ENCODE measurements at regions of chr15 and their contacts with region 1.

Region 1: DNA sequence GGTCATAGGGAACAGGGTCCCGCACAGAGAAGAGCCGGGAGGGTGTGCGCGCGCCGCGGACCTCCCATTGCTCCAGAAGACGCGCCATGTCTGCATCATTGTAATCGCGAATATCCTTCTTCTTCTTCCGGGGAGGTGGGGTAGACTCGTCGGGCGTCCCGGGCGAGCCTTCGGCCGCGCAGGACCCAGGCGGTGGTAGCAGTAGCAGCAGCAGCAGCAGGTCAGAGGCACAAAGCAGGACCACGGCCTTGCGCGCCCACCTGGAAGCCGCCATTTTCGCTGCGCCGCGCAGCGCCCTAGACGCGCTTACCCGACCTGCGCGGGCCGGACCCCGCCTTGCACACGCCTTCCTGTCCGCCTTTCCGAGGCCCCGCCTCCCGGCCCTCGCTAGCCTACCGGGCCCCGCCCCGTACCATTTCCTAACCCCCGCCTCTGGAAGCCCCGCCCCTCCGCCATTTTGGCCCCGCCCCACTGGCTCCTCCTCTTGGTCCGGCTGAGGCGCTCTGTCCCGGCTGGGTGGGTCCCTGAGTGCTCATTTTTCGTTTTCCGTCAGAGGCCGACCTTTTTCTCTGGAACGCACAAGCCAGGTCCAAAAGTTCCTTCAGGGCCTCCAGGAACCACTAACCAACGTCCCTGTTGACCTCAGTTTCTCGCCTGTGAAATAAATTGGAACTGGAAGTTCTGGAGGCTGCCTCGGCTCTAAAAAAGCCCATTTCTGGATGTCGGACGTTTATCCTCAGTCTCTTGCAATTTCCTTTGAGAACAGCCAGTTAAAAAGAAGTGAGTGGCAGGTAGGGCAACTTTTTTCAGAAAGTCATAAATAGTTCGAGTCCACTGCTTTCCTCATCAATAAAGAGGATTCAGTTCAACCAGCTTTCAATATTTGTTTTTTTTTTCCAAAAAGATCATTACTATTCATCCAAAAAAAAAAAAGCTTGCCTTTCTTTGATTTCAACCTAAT is at the start of gene MESD:
- ATAC-seq: peak; percentile 65 to 99 (median 98)
- H3K4me3 ChIP-seq: peak within 1 kb of the TSS; percentile 81 to 99 (median 85)
- H3K27ac ChIP-seq: peak within 1 kb of the TSS; percentile 81 to 90
- H3K4me1 ChIP-seq: peaks cover 10 to 18% of the 10 kb centered on the region in 2 donors
- total RNA-seq, gene MESD: 9.7 to 83.2 (median 23.1) TPM

Region 2: DNA sequence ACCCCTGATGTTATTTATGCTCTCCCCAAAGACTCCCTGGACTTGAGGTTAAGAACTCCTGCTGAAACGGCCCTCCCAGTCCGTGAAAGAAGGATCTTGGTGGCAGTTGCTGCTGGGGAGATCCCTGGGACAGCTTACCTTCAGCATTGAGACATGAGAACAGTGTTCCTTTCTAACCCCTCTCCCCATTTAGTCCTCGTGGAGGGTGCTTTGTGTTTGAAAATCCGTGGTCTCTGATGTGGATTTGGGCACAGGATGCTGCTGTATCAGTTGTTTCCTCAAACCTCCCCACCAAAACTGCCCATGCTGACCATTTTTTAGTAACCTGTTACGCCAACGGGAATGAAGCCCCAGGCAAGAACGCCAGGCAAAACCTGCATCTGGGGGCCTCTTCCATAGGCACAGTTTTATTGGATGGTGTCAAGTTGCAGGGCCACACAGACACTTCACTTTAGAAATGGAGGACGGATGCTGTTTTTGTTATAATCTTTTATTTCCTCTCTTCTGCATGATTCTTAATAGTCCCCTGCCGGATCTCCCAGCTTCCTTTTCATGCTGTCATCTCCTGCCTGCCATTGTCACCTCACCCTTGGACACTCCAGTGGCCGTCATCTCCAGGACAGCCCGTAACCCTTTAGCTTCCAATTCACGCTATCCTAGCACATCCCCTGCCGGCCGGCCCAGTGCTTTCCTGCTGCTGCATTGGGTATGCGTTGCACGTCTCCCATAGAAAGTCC is 242.3 kb before region 1 on chr15:
- in situ Hi-C with region 1: no loop called
- ATAC-seq: peak in 4 of 8 experiments; percentile 35 to 64 (median 47)
- H3K4me3 ChIP-seq: no peak overlapping the region
- H3K27ac ChIP-seq: no peak overlapping the region
- H3K4me1 ChIP-seq: peaks cover 15 to 37% of the 10 kb centered on the region in 2 donors

Region 3: GRCh38 chr15:81106560-81106959 is 116.8 kb after region 1 on chr15:
- in situ Hi-C with region 1: loop called in 1 of 9 experiments (anchors 25 kb)
- ATAC-seq: peak; percentile 12 to 78 (median 36)
- H3K4me3 ChIP-seq: no peak overlapping the region
- H3K27ac ChIP-seq: no peak overlapping the region
- H3K4me1 ChIP-seq: no peaks in the 10 kb centered on the region

Region 4: DNA sequence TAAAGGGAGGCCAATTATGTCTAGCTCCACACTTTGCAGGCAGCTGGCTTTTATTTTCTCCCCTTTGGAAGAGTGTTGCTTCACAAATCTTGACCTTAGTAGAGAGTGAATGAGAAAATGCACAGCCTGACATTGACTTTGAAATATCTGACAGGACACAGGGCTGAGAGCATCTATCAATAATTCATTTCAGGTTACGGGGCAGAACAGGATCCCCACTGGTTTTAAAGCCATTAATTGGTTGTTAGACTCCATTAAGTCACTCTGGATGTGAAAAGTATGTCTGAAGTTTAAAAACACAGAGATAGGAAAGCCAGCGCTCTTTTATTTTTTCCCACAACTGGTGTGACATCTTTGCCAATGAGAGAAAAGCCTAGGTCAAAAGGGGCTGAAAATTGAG is 636.1 kb after region 1 on chr15:
- in situ Hi-C with region 1: no loop called
- ATAC-seq: no peak
- H3K4me3 ChIP-seq: no peak overlapping the region
- H3K27ac ChIP-seq: no peak overlapping the region
- H3K4me1 ChIP-seq: no peaks in the 10 kb centered on the region